ENCODE measurements at regions of chr7 and their contacts with region 1.

Region 1: DNA sequence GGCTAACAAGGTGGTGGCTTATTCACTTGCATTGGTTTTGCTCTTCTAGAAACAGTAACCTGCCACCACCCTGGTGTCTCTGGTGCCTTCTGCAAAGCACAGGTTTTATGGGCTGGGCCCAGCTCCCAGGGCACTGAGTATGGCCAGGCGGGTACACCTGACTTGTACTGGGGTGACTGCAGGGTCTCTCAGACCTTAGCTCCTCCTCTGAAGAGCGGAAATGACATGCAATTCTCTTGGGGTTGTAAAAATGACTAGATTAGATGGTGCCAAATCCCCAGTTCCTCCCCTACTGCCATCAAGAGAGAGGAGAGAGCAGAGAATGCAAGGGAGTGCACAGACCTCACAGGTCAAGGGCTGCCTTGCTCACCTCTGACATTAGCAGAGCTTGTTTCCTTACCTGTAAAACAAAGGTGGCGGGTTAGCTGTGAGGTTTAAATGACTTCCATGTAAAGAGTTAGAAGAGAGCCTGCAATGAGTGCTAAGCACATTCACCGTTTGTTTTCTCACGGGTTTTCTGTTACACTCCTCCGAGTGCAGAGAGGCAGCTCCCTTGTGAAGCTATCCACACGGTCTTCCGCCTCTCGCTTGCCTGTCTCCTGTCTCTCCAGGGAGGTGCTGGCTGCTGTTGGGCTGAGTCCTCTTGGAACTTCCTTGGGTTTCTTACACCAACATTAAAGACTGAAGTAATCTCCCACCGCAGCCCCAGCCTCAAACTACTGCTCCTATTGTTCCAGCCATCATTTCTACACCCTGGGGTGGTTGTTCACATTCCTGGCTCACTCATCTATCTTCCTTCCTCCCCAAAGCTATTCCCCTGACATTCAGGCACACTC is 14.5 kb downstream of the ESYT2 start:
- DNase-seq: no peak
- ATAC-seq: peak; percentile 55
- H3K4me3 Mint-ChIP-seq: no peak overlapping the region
- H3K27ac Mint-ChIP-seq: peak overlapping the region; percentile 78
- H3K4me1 Mint-ChIP-seq: peaks cover 83% of the 10 kb centered on the region
- H3K27me3 Mint-ChIP-seq: no peaks in the 10 kb centered on the region
- CTCF ChIP-seq: no peak

Region 2: DNA sequence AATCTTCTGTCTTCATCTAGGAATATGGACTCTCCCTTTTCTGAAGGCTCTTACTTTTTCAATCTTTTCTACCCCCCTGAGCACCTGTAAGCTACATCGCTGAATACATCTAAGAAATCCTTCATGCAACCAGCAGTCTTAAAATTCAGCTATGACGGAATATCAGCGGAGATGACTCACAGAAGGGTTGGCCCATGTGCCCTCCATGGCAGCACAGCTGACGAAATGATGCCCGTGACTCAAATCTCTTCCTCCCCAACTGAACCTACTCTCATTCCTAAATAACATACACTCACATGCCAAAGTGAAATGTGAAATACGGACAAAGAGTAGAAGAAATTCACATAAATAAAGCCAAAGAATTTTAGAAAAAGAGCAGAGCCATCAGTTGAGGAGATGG is 80.0 kb before region 1 on chr7:
- CTCF ChIA-PET with region 1: no interaction called
- POLR2A ChIA-PET with region 1: no interaction called
- DNase-seq: no peak
- ATAC-seq: no peak
- H3K4me3 Mint-ChIP-seq: no peak overlapping the region
- H3K27ac Mint-ChIP-seq: peak overlapping the region; percentile 36
- H3K4me1 Mint-ChIP-seq: peaks cover 31% of the 10 kb centered on the region
- H3K27me3 Mint-ChIP-seq: no peaks in the 10 kb centered on the region
- CTCF ChIP-seq: no peak

Region 3: GRCh38 chr7:158863611-158864506 is 49.0 kb after region 1 on chr7:
- CTCF ChIA-PET with region 1: interaction called, 12 read pairs
- POLR2A ChIA-PET with region 1: no interaction called
- DNase-seq: peak; percentile 37
- ATAC-seq: peak; percentile 34
- H3K4me3 Mint-ChIP-seq: peak overlapping the region; percentile 71
- H3K27ac Mint-ChIP-seq: peak overlapping the region; percentile 87
- H3K4me1 Mint-ChIP-seq: peaks cover 64% of the 10 kb centered on the region
- H3K27me3 Mint-ChIP-seq: no peaks in the 10 kb centered on the region; the same call in 1 of the 2 replicates
- CTCF ChIP-seq: no peak

Region 4: DNA sequence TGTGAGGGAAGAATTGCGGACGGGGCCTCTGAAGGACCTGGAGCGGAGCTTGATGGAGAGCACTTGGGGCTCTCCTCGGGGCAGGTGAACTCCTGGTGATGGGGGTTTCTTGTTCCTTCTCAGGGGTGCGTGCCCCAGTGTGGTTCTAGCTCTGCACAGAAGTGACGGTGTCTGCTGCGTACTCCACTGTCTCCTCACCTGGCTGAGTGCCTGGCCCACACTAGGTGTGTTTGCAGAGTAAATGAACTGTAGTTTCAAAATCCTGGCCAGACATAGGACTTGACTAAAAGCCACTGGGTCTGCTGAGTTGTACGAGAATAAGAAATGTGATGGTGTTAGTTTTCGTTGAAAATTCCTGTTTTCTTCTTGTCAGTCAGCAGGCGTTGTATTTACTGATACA is 77.1 kb after region 1 on chr7:
- CTCF ChIA-PET with region 1: no interaction called
- POLR2A ChIA-PET with region 1: no interaction called
- DNase-seq: no peak
- ATAC-seq: no peak
- H3K4me3 Mint-ChIP-seq: no peak overlapping the region
- H3K27ac Mint-ChIP-seq: no peak overlapping the region
- H3K4me1 Mint-ChIP-seq: no peaks in the 10 kb centered on the region
- H3K27me3 Mint-ChIP-seq: no peaks in the 10 kb centered on the region
- CTCF ChIP-seq: no peak

Measured in WTC11 (cell line).